Activated CD8-positive, alpha-beta T cell treated with anti-CD3 and anti-CD28 coated beads for 36 hours (primary cell): ENCODE measurements at regions of chr17 and their contacts with region 1.

Region 1: GRCh38 chr17:81854974-81855774 is 5.2 kb downstream of the P4HB start:
- DNase-seq: no peak
- ATAC-seq: no peak
- H3K4me3 Mint-ChIP-seq: no peak overlapping the region
- H3K27ac Mint-ChIP-seq: no peak overlapping the region
- H3K4me1 Mint-ChIP-seq: peaks cover 29% of the 10 kb centered on the region
- H3K27me3 Mint-ChIP-seq: no peaks in the 10 kb centered on the region
- CTCF ChIP-seq: no peak

Region 2: DNA sequence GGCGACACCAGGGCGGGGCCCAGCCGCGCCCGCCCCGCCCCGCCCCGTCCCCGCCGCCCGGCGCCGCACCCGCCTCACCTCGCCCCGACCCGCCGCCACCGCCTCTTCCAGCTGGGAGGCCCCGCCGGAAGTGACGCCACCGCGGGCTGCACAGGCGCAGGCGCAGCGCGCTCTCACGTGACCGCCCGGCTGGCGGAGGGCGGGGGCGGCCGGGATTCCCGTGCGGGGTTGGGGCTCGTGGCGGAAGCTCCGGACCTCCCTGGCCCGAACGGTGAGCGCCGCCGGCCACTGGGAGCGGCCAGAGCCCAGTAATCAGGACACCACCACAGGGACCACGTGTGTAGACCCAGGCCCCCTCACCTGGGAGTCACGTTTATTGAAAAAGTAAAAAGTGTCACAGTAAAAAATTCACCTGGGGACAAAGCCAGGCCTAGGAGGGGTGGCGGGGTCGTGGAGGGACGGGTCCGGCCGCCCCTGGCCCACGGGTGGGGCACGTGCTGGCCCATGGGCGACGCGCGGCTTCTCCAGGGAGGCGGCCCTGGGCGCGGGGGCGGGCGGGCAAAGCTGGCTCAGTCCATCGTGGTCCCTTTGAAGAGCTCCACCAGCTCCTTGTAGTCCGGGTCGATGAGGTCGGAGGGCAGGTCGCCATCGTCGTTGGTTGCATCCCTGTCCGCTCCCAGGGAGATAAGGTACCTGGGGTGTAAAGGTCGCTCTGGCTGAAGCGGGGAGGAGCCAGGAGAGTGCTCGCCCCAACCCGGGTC is 21.8 kb before region 1 on chr17 and contains the start of gene MCRIP1:
- CTCF ChIA-PET with region 1: no interaction called
- POLR2A ChIA-PET with region 1: interaction called, 11 read pairs
- intact Hi-C with region 1: no loop called
- DNase-seq: peak; percentile 96
- ATAC-seq: peak; percentile 82
- H3K4me3 Mint-ChIP-seq: peak within 1 kb of the TSS; percentile 95
- H3K27ac Mint-ChIP-seq: peak within 1 kb of the TSS; percentile 95
- H3K4me1 Mint-ChIP-seq: peaks cover 25% of the 10 kb centered on the region
- H3K27me3 Mint-ChIP-seq: no peaks in the 10 kb centered on the region
- CTCF ChIP-seq: no peak
- total RNA-seq, gene MCRIP1: 55.1 to 56.5 TPM

Region 3: GRCh38 chr17:81840826-81841778 is 14.1 kb before region 1 on chr17:
- CTCF ChIA-PET with region 1: no interaction called
- POLR2A ChIA-PET with region 1: interaction called, 35 read pairs
- intact Hi-C with region 1: no loop called
- DNase-seq: no peak
- ATAC-seq: no peak
- H3K4me3 Mint-ChIP-seq: no peak overlapping the region
- H3K27ac Mint-ChIP-seq: no peak overlapping the region
- H3K4me1 Mint-ChIP-seq: no peaks in the 10 kb centered on the region
- H3K27me3 Mint-ChIP-seq: no peaks in the 10 kb centered on the region
- CTCF ChIP-seq: no peak